Lower lobe of right lung (tissue), 2 donors: ENCODE measurements at regions of chr11 and their contacts with region 1.

Region 1: GRCh38 chr11:74449369-74449931 is 17.9 kb downstream of the KCNE3 start:
- DNase-seq: no peak
- ATAC-seq: peak; percentile 85 to 86
- H3K4me3 ChIP-seq: no peak overlapping the region
- H3K27ac ChIP-seq: no peak overlapping the region
- H3K4me1 ChIP-seq: peaks cover 12% of the 10 kb centered on the region
- H3K27me3 ChIP-seq: no peaks in the 10 kb centered on the region
- CTCF ChIP-seq: peak; percentile 70

Region 2: DNA sequence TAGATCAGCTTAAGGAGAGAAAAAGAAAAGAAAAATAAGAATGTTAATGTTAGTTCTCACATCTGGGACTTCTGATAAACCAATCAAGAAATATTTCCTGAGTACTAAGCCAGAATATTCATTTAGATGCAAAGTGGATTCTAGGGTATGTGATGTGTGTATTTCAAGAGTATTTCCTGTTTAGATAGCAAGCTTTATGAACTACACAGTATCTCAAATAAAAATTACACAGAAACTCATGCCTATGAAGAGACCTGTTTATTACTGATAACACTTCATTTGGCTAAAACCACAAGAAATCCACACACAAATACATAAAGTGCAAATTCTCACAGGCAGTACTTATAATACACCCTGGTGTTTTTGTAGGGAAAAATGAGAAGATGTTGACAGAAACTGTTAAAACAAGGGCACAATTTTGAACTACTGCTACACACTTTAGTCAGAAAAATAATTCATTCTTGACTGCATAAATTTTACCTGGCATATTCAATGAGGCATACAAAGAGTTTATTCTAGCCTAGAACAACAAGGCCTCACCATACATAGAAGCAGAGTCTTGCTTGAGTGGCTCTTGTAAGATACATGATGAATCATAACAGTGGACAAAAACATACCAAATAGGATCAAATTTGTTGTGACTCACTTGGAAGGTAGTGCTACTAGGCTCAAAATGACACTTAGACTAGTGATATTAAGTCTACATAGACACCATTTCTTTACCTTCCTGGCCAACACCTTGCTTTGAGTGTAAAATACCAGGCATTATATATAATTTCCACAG is 119.2 kb before region 1 on chr11:
- intact Hi-C with region 1: no loop called
- DNase-seq: no peak
- ATAC-seq: no peak
- H3K4me3 ChIP-seq: no peak overlapping the region
- H3K27ac ChIP-seq: no peak overlapping the region
- H3K4me1 ChIP-seq: peaks cover 17% of the 10 kb centered on the region
- H3K27me3 ChIP-seq: no peaks in the 10 kb centered on the region
- CTCF ChIP-seq: no peak

Region 3: GRCh38 chr11:74341921-74342320 is 107.5 kb before region 1 on chr11:
- intact Hi-C with region 1: no loop called
- DNase-seq: no peak
- ATAC-seq: no peak
- H3K4me3 ChIP-seq: no peak overlapping the region
- H3K27ac ChIP-seq: no peak overlapping the region
- H3K4me1 ChIP-seq: no peaks in the 10 kb centered on the region
- H3K27me3 ChIP-seq: no peaks in the 10 kb centered on the region
- CTCF ChIP-seq: no peak

Region 4: DNA sequence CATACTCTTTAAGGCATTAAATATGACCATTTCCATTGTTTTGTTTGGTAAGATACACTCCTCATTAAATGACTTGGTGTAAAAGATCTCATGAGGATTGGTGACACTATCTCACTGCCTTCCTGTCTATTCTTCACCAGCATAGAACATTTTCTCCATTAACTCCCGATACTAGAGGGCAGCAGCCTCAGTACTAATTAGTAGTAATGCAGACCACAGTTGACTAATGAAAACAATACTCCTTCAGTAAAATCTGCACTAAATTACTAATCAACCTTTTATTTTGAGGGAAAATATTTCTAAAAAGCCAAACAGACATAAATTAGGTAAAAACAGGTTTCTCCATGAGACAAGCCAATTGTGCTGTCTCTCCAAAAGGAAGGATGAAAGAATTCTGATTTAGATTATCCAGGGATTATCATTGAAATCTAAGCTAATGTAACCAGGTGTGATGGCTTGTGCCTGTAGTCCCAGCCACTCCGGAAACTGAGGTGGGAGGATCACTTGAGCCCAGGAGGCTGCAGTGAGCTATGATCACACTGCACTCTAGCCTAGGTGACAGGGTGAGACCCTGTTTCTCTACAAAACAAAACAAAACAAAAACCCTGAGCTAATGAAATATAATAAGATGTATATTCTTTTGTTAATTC is 60.6 kb before region 1 on chr11:
- intact Hi-C with region 1: loop called (anchors 5 kb)
- DNase-seq: no peak
- ATAC-seq: peak; percentile 75 to 88
- H3K4me3 ChIP-seq: no peak overlapping the region
- H3K27ac ChIP-seq: no peak overlapping the region
- H3K4me1 ChIP-seq: no peaks in the 10 kb centered on the region
- H3K27me3 ChIP-seq: no peaks in the 10 kb centered on the region
- CTCF ChIP-seq: peak; percentile 76